ENCODE measurements at regions of chr15 and their contacts with region 1.

Region 1: GRCh38 chr15:57146506-57147201 is 228.2 kb downstream of the TCF12 start:
- DNase-seq: peak; percentile 86
- H3K4me3 ChIP-seq: peak overlapping the region; percentile 29
- H3K27ac ChIP-seq: peak overlapping the region; percentile 96
- H3K4me1 ChIP-seq: peaks cover 83% of the 10 kb centered on the region
- H3K27me3 ChIP-seq: no peaks in the 10 kb centered on the region
- CTCF ChIP-seq: peak; percentile 87

Region 2: DNA sequence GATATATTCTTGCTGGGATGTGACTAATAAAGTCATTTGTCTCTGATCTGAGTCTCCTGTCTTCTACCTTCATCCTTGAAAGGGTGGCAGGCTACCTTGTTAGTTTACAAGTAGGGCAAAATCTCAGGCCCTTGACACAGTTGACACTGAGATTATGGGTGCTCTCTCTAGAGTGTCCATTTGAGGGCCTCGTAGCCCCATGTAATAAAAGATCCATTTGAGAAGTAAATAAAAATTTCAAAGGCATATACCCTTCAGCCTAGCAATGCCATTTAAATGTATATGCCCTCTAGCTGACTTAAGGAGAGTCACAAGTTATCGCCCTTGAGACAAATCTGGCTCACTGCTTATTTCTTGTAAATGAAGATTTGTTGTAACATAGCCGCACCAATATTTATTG is 129.6 kb before region 1 on chr15:
- CTCF ChIA-PET with region 1: no interaction called
- POLR2A ChIA-PET with region 1: no interaction called
- intact Hi-C with region 1: loop called (anchors 5 kb)
- DNase-seq: peak; percentile 58
- H3K4me3 ChIP-seq: no peak overlapping the region
- H3K27ac ChIP-seq: no peak overlapping the region
- H3K4me1 ChIP-seq: peaks cover 37% of the 10 kb centered on the region
- H3K27me3 ChIP-seq: no peaks in the 10 kb centered on the region
- CTCF ChIP-seq: peak; percentile 44

Region 3: GRCh38 chr15:57033715-57034439 is 112.8 kb before region 1 on chr15:
- CTCF ChIA-PET with region 1: no interaction called
- POLR2A ChIA-PET with region 1: no interaction called
- intact Hi-C with region 1: no loop called
- DNase-seq: no peak
- H3K4me3 ChIP-seq: no peak overlapping the region
- H3K27ac ChIP-seq: no peak overlapping the region
- H3K4me1 ChIP-seq: peaks cover 35% of the 10 kb centered on the region
- H3K27me3 ChIP-seq: no peaks in the 10 kb centered on the region
- CTCF ChIP-seq: no peak

Region 4: GRCh38 chr15:57213862-57214261 is 67.2 kb after region 1 on chr15:
- CTCF ChIA-PET with region 1: interaction called, 17 read pairs
- POLR2A ChIA-PET with region 1: no interaction called
- intact Hi-C with region 1: loop called (anchors 2 kb)
- DNase-seq: peak; percentile 85
- H3K4me3 ChIP-seq: peak overlapping the region; percentile 18
- H3K27ac ChIP-seq: peak overlapping the region; percentile 54
- H3K4me1 ChIP-seq: peaks cover 74% of the 10 kb centered on the region
- H3K27me3 ChIP-seq: no peaks in the 10 kb centered on the region
- CTCF ChIP-seq: peak; percentile 67

Region 5: GRCh38 chr15:57298843-57299550 is 152.3 kb after region 1 on chr15:
- CTCF ChIA-PET with region 1: no interaction called
- POLR2A ChIA-PET with region 1: no interaction called
- intact Hi-C with region 1: no loop called
- DNase-seq: no peak
- H3K4me3 ChIP-seq: no peak overlapping the region
- H3K27ac ChIP-seq: peak overlapping the region; percentile 29
- H3K4me1 ChIP-seq: no peaks in the 10 kb centered on the region
- H3K27me3 ChIP-seq: no peaks in the 10 kb centered on the region
- CTCF ChIP-seq: no peak

Region 6: DNA sequence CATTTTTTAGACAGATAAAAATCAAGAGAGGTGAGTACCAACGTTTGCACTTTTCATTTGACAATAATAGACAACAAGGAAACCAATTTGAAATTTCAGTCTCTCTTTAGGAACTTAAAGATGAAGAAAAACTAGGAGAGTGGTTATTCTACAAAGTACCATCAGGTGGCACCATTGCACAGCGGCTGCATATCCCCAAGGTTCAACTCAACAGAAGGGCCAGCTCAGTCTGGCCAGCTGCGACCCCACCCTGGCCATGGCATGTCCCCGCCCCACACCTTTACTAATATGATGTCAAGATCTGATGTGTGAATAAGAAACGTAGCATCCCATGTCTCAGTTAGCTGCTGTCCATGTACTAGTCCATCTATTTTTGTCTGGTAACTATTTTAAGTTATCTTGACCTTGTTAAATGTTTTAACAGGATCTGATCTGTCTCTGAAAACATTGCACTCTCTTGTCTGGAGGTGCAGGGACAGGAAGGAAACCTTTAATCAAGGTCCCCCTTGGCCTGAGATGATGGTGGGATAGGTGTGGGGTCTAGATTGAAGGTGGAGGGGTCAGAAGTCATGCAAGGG is 194.1 kb after region 1 on chr15:
- CTCF ChIA-PET with region 1: no interaction called
- POLR2A ChIA-PET with region 1: no interaction called
- intact Hi-C with region 1: loop called (anchors 10 kb)
- DNase-seq: peak; percentile 68
- H3K4me3 ChIP-seq: no peak overlapping the region
- H3K27ac ChIP-seq: no peak overlapping the region
- H3K4me1 ChIP-seq: peaks cover 6% of the 10 kb centered on the region
- H3K27me3 ChIP-seq: no peaks in the 10 kb centered on the region
- CTCF ChIP-seq: peak; percentile 86